H1 (cell line): ENCODE measurements at regions of chr16 and their contacts with region 1.

Region 1: GRCh38 chr16:57628008-57628781 is at the start of gene ADGRG1:
- DNase-seq: peak; percentile 65 to 72
- H3K4me3 ChIP-seq: peak within 1 kb of the TSS in 1 of 4 experiments; percentile 49; a peak in 2 of 8 replicates
- H3K27ac ChIP-seq: no peak within 1 kb of the TSS
- H3K4me1 ChIP-seq: peaks cover 0 to 21% (median 15%) of the 10 kb centered on the region in 4 experiments; a peak in 6 of 7 replicates
- H3K27me3 ChIP-seq: peaks cover 0 to 2% (median 0%) of the 10 kb centered on the region in 4 experiments; a peak in 2 of 7 replicates
- CTCF ChIP-seq: peak; percentile 15 to 38 (median 26); a peak in 3 of 4 replicates
- EP300 ChIP-seq: no peak
- POLR2A ChIP-seq: no peak
- RAD21 ChIP-seq: peak in 1 of 2 experiments; percentile 21; a peak in 1 of 4 replicates
- total RNA-seq, gene ADGRG1: 0.78 and 1.3 TPM in 2 replicates

Region 2: GRCh38 chr16:57639172-57639887 is 11.1 kb after region 1 on chr16:
- CTCF ChIA-PET with region 1: interaction called, 39 read pairs
- POLR2A ChIA-PET with region 1: interaction called, 11 read pairs
- DNase-seq: peak in 1 of 2 experiments; percentile 84
- H3K4me3 ChIP-seq: peak overlapping the region in 1 of 4 experiments; percentile 18; a peak in 2 of 8 replicates
- H3K27ac ChIP-seq: no peak overlapping the region
- H3K4me1 ChIP-seq: peaks cover 0 to 3% (median 1%) of the 10 kb centered on the region in 4 experiments; a peak in 4 of 7 replicates
- H3K27me3 ChIP-seq: peaks cover 0 to 6% (median 4%) of the 10 kb centered on the region in 4 experiments; a peak in 5 of 7 replicates
- CTCF ChIP-seq: no peak
- EP300 ChIP-seq: no peak
- POLR2A ChIP-seq: no peak
- RAD21 ChIP-seq: no peak

Region 3: GRCh38 chr16:57675741-57676584 is 47.8 kb after region 1 on chr16:
- CTCF ChIA-PET with region 1: no interaction called
- POLR2A ChIA-PET with region 1: no interaction called
- DNase-seq: peak; percentile 13 to 58
- H3K4me3 ChIP-seq: peak overlapping the region in 1 of 4 experiments; percentile 0; a peak in 1 of 8 replicates
- H3K27ac ChIP-seq: no peak overlapping the region
- H3K4me1 ChIP-seq: peaks cover 3 to 16% (median 11%) of the 10 kb centered on the region in 4 experiments
- H3K27me3 ChIP-seq: no peaks in the 10 kb centered on the region; a peak in 1 of 7 replicates
- CTCF ChIP-seq: no peak
- EP300 ChIP-seq: no peak
- POLR2A ChIP-seq: no peak
- RAD21 ChIP-seq: no peak